Heart right ventricle (tissue), 16 donors: ENCODE measurements at regions of chr7 and their contacts with region 1.

Region 1: DNA sequence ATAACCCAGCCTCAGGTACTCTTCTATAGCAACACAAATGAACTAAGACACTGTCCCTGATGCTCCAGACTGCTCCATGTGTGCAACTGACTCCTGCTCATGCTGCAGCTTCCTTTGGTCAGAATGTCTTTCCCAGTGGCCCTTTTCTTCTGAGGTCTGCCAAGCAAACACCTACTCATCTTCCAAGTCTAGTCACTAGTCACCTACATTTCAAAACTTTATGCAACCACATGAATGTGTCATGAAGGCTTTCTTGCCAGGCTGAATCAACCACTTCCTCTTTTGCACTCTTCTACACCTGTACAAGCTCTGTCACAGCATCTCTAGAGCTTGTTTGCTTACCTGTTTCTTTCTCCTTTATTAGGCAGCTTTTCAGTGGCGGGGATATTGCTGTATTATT is 75.8 kb downstream of the LSMEM1 start:
- DNase-seq: no peak
- ATAC-seq: no peak
- H3K4me3 ChIP-seq: no peak overlapping the region
- H3K27ac ChIP-seq: no peak overlapping the region
- H3K4me1 ChIP-seq: no peaks in the 10 kb centered on the region
- H3K27me3 ChIP-seq: no peaks in the 10 kb centered on the region
- CTCF ChIP-seq: no peak

Region 2: DNA sequence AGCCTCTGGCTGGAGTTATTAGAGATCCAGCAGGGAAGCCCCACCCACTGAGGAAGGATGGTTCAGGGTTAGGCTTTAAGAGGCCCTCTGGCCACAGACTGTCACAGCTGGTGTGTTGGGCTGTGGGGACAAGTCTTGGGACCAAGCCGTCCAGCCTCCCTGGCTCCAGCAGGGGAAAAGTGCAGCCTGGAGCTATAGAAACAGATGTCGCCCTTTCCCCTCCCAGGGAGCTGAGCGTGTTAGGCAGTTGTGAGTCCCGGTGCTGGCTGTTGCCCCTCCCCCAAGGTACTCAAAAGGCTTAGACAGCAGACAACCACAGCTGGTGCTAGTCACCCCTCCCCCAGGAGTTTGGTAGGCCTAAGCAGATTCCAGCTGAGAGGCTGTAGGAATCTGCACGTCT is 90.2 kb after region 1 on chr7:
- intact Hi-C with region 1: no loop called
- DNase-seq: no peak
- ATAC-seq: no peak
- H3K4me3 ChIP-seq: no peak overlapping the region
- H3K27ac ChIP-seq: no peak overlapping the region
- H3K4me1 ChIP-seq: no peaks in the 10 kb centered on the region
- H3K27me3 ChIP-seq: no peaks in the 10 kb centered on the region
- CTCF ChIP-seq: no peak

Region 3: DNA sequence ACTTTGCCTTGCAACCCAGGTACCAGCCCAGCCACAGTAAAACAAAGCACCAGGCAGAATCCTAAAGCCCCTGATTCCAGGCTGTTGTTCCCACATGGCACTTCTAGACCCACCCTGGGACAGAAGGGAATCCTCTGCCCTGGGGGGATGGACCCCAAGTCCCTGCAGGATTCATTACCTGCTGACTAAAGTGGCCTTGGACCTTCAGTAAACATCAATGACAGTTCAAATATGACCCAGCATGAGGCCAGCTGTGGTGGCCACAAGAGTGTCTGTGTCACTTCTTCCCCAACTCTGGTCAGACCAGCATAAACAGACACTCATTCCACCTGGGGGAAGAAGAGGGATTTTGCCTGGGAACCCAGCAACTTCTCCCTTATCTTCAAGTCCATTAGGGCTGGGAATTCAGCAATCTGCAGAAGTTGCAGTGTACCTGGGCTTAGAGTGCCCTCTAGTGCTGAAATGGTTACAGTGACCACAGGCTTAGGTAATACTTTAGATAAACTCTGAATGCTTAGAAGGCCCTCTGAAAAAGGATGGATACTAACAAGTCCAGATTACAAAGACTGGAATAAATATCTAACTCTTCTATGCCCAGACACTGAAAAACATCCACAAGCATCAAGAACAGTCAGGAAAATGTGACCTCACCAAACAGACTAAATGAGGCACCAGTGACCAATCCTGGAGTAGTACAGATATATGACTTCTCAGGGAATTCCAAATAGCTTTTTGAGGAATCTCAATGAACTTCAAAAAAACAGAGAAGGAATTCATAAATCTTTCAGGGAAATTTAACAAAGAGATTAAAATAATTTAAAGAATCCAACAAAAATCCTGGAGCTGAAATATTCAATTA is 342.0 kb after region 1 on chr7:
- intact Hi-C with region 1: loop called in 7 of 10 experiments (anchors 2 to 10 kb)
- DNase-seq: peak in 1 of 2 donors; percentile 35
- ATAC-seq: peak; percentile 45 to 84 (median 72)
- H3K4me3 ChIP-seq: no peak overlapping the region
- H3K27ac ChIP-seq: no peak overlapping the region
- H3K4me1 ChIP-seq: peaks cover 0 to 28% (median 14%) of the 10 kb centered on the region in 9 donors
- H3K27me3 ChIP-seq: no peaks in the 10 kb centered on the region
- CTCF ChIP-seq: peak; percentile 10 to 81 (median 68)

Region 4: DNA sequence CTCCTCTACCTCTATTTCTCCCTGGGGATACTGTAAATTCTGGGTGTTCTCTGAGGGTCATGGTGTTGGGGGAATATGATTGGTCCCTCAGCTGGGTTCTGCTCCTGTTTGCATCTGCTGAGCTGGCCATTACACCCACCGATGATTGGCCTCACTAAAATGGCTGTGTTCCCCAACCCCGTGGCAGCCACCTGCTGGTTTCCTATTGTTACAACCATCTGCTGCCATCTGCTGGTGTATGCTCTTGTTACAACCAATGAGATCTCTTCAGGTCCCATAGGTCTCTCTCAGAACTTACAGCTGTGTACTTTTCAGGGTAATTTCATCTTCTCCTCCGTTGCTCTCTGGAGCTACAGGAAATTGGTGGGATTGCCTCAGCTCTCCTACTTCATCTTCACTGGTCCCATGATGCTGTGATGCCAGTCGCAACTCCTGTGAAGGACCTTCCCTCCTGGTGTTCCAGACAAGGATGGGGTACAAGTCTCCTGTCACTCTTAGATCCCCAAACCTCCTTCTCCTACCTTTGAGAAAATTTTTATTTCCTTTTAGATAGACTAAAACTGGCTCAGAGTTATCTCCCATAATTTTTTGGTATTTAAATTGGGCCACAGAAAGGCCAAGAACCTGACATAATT is 865.2 kb after region 1 on chr7:
- intact Hi-C with region 1: loop called in 5 of 10 experiments (anchors 5 to 10 kb)
- DNase-seq: peak; percentile 31 to 78
- ATAC-seq: peak; percentile 49 to 90 (median 76)
- H3K4me3 ChIP-seq: no peak overlapping the region
- H3K27ac ChIP-seq: no peak overlapping the region
- H3K4me1 ChIP-seq: peaks cover 0 to 3% (median 0%) of the 10 kb centered on the region in 9 donors
- H3K27me3 ChIP-seq: no peaks in the 10 kb centered on the region
- CTCF ChIP-seq: peak; percentile 29 to 86 (median 80)